Ovary (tissue), 10 donors: ENCODE measurements at regions of chr10 and their contacts with region 1.

Region 1: DNA sequence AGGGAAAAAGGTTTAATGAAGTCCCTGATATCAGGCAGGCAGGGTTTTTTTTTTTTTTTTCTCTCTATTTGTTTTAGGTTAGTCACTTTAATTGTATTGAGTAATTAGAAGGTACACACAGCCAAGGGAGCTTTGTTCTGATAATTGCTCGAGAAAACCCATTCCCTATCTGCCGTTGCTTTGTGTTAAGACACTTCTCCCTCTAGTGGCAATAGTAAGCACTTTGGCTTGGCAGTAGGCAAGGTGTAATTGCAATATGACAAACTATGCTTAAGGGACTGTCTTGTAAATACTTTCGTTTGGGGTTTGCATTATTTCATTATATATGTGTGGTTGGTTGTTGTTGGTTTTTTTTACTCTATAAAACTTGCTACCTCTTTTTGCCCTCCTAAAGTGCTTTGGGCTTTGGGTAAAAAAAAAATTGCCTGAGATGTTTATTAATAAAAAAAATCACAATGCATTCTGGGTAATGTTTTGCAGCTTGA is 113.4 kb downstream of the BTRC start:
- DNase-seq: peak in 1 of 5 donors; percentile 25
- H3K4me3 ChIP-seq: no peak overlapping the region
- H3K27ac ChIP-seq: no peak overlapping the region
- H3K4me1 ChIP-seq: no peaks in the 10 kb centered on the region
- H3K27me3 ChIP-seq: no peaks in the 10 kb centered on the region
- CTCF ChIP-seq: peak; percentile 22 to 70 (median 68)
- EP300 ChIP-seq: no peak
- POLR2A ChIP-seq: no peak

Region 2: DNA sequence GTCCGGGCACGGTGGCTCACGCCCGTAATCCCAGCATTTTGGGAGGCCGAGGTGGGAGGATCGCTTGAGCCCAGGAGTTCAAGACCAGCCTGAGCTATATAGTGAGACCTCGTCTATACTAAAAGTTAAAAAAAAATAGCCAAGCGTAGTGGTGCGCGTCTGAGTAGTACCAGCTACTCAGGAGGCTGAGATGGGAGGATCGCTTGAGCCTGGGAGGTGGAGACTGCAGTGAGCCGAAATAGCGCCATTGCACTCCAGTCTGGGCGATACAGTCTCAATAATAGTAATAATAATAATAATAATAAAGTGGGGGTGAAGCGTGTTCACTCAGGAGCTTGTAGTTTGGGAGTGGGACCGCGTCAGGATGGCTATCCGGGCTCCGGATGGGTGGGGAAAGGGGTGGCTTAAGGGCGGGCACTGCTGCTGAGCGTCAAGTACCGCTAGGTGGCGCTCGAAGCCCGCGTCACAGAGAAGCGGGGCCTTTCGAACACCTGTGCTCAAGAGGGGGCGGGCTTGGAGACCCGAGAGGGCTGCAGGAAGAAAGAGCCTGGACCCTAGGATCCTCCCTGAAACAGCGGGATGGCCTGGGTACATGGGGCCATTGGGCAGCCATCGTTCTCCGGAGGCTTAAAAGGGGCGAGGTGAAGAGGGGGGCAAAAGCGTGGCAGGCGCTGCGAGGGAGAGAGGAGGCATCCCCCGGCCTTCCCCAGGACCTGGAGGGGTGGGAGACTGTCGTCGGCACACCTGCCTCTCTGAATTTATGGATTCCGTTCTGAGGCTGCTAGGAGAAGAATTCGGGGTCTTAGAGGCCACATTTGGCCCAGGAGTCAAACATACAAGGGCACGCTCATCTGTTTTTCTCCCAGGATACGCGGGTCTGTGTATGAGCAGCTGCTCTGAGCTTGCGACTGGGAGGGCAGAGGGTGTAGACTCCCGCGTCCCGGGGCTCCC is 252.6 kb before region 1 on chr10:
- intact Hi-C with region 1: loop called in 3 of 4 experiments (anchors 10 kb)
- DNase-seq: peak; percentile 39 to 77 (median 61)
- H3K4me3 ChIP-seq: no peak overlapping the region
- H3K27ac ChIP-seq: no peak overlapping the region
- H3K4me1 ChIP-seq: peaks cover 4% of the 10 kb centered on the region
- H3K27me3 ChIP-seq: no peaks in the 10 kb centered on the region
- CTCF ChIP-seq: peak; percentile 45 to 64 (median 53)
- EP300 ChIP-seq: no peak
- POLR2A ChIP-seq: no peak